PC-3 (cell line): ENCODE measurements at regions of chr5 and their contacts with region 1.

Region 1: DNA sequence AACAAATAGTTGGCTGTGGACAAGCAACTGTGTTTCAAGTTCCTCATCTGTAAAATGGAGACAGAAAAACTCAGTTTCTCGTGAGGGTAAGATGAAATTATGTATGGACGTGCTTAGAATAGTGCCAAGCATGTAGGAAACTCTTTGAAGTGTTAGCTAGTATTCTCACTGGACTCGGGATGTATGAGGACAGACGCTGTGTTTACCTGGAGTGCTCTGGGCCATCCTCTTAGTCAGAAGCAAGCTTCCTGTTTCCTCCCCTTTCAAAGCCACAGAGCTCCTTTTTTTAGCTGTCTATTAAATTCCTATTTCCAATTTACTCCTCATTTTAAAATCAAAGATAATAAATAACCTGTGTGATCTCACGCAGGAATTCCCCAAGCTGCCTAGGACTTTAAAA is 23.8 kb upstream of the IQGAP2 start:
- DNase-seq: peak; percentile 52
- ATAC-seq: peak; percentile 54
- H3K4me3 ChIP-seq: no peak overlapping the region
- H3K27ac ChIP-seq: no peak overlapping the region
- H3K4me1 ChIP-seq: peaks cover 11% of the 10 kb centered on the region
- H3K27me3 ChIP-seq: no peaks in the 10 kb centered on the region
- CTCF ChIP-seq: no peak

Region 2: GRCh38 chr5:76331126-76331525 is 48.2 kb before region 1 on chr5:
- CTCF ChIA-PET with region 1: no interaction called
- POLR2A ChIA-PET with region 1: no interaction called
- intact Hi-C with region 1: no loop called
- DNase-seq: no peak
- ATAC-seq: no peak
- H3K4me3 ChIP-seq: no peak overlapping the region
- H3K27ac ChIP-seq: no peak overlapping the region
- H3K4me1 ChIP-seq: no peaks in the 10 kb centered on the region
- H3K27me3 ChIP-seq: peaks cover 48% of the 10 kb centered on the region
- CTCF ChIP-seq: no peak

Region 3: DNA sequence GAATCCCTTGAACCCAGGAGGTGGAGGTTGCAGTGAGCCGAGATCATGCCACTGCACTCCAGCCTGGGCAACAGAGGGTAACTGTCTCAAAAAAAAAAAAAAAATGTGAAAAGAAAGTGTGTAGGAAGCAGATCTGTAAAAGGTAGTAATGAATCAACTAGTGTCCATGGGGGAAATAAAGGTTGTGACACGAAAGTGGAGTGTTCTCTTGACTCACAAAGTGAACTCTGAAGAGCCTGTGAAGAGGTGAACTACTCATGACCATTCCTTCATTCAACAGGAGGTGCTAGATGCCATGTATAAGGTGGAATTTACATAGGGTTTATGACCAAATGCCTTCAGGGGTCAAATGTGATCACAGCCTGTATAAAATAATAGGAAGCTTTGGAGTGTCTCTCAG is 36.5 kb after region 1 on chr5:
- CTCF ChIA-PET with region 1: no interaction called
- POLR2A ChIA-PET with region 1: interaction called, 42 read pairs
- intact Hi-C with region 1: no loop called
- DNase-seq: no peak
- ATAC-seq: no peak
- H3K4me3 ChIP-seq: no peak overlapping the region
- H3K27ac ChIP-seq: no peak overlapping the region
- H3K4me1 ChIP-seq: no peaks in the 10 kb centered on the region
- H3K27me3 ChIP-seq: peaks cover 18% of the 10 kb centered on the region; the same call in 1 of the 2 replicates
- CTCF ChIP-seq: no peak

Region 4: DNA sequence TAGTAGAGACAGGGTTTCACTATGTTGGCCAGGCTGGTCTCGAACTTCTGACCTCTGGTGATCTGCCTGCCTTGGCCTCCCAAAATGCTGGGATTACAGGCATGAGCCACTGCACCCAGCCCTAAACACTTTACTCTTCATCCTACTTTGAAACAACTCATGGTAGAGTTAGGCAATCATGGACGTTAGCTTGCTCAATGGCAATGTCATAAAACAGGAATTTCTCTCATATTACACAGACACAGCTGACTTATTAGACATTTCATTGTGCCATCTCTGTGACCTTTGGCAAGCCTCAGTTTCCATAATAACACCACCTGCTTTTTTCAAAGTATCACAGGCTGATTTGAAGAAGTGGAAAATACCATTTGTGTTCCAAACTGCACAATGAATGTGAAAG is 1300.5 kb after region 1 on chr5:
- CTCF ChIA-PET with region 1: no interaction called
- POLR2A ChIA-PET with region 1: no interaction called
- intact Hi-C with region 1: no loop called
- DNase-seq: no peak
- ATAC-seq: no peak
- H3K4me3 ChIP-seq: no peak overlapping the region
- H3K27ac ChIP-seq: no peak overlapping the region
- H3K4me1 ChIP-seq: no peaks in the 10 kb centered on the region
- H3K27me3 ChIP-seq: no peaks in the 10 kb centered on the region
- CTCF ChIP-seq: no peak